Ovary (tissue), 10 donors: ENCODE measurements at regions of chr3 and their contacts with region 1.

Region 1: DNA sequence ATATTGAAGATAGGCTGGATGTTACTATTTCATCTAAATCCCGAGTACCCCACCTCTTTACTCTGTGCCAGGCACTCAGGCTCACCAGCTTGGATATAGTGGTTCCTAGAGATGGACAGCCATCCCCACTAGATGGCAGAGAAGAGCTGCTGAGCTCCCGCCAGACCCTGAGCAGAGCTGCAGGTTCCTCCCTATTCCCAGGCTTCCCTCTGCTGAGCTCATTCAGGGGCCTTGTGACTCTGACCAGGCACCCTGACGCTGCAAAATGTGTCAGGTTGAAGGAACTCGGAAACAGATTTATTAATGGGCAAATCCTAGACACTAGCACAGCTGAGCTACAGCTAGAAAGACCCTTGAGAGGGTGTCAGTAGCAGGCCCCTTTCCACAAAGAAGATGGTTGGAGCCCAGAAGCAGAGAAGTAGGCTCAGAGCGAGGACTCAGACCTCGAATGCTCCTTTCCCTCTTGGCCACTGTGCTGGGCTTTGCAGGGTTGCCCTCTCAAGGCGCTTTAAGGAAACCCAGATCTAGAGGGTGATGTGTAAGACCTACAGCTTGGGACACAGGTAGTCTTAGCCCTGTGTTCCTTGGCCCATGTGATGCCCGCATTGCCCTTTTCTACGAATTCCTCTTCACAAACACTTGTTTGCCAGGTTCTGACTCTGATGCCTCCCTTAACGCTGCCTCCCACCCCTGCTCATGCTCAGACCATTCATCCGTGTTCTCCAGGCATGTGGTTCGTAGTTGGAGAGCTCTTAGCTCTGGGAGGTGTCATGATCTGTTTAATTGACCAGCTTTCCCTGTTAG is 38.0 kb upstream of the RHO start:
- DNase-seq: peak; percentile 80 to 85 (median 82)
- H3K4me3 ChIP-seq: no peak overlapping the region
- H3K27ac ChIP-seq: peak overlapping the region; percentile 32 to 59
- H3K4me1 ChIP-seq: peaks cover 9% of the 10 kb centered on the region
- H3K27me3 ChIP-seq: no peaks in the 10 kb centered on the region
- CTCF ChIP-seq: peak; percentile 78 to 90 (median 82)
- EP300 ChIP-seq: no peak
- POLR2A ChIP-seq: no peak

Region 2: GRCh38 chr3:129560901-129561594 is 70.6 kb after region 1 on chr3:
- intact Hi-C with region 1: loop called in 2 of 4 experiments (anchors 5 to 10 kb)
- DNase-seq: peak; percentile 91 to 95 (median 92)
- H3K4me3 ChIP-seq: peak overlapping the region; percentile 8
- H3K27ac ChIP-seq: peak overlapping the region; percentile 82 to 92
- H3K4me1 ChIP-seq: peaks cover 15% of the 10 kb centered on the region
- H3K27me3 ChIP-seq: no peaks in the 10 kb centered on the region
- CTCF ChIP-seq: no peak
- EP300 ChIP-seq: no peak
- POLR2A ChIP-seq: no peak

Region 3: GRCh38 chr3:129606636-129607390 is 116.4 kb after region 1 on chr3 and contains the start of gene PLXND1:
- intact Hi-C with region 1: loop called in 3 of 4 experiments (anchors 5 to 10 kb)
- DNase-seq: peak in 4 of 5 donors; percentile 63 to 73 (median 70)
- H3K4me3 ChIP-seq: peak within 1 kb of the TSS; percentile 50
- H3K27ac ChIP-seq: peak within 1 kb of the TSS; percentile 73 to 79
- H3K4me1 ChIP-seq: peaks cover 11% of the 10 kb centered on the region
- H3K27me3 ChIP-seq: no peaks in the 10 kb centered on the region
- CTCF ChIP-seq: no peak
- EP300 ChIP-seq: no peak
- POLR2A ChIP-seq: no peak
- total RNA-seq, gene PLXND1: 21.6 to 111 (median 57.1) TPM

Region 4: DNA sequence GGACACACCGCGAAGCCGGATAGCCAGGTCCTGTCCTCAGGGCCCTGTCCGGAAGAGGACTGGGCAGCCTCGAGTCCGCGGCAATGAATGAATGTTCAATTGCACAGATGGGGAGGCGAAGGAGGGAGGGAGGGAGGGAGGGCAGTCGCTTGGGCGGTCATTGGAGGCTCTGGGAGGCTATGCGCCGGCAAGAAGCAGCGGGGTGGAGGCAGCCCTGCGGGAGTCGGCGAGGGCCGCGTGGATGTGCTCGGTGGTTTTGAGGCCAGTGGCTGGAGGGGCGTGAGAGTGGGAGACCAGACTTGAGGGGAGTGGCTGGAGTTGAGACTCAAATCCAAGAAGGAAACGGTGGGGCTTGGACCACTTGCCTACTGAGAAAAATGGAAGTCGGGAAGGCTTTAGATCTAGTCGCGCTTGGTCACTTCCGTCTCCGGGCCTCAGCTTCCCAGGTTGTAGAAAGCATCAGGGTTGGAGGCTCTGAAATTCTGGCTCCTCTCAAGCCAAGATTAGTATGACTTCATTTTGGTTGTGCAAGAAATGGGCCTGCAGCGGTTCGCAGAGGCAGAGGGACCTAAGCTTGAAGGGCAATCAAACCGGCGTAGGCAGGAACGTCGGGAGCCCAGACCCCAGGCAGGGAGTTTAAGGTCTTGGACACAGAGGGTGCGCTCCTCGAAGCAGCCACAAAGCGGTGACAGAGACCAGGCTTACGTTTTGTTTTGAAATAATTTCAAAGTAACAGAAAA is 137.2 kb after region 1 on chr3:
- intact Hi-C with region 1: loop called in 2 of 4 experiments (anchors 1 to 5 kb)
- DNase-seq: peak; percentile 70 to 81 (median 76)
- H3K4me3 ChIP-seq: peak overlapping the region; percentile 59
- H3K27ac ChIP-seq: peak overlapping the region; percentile 46 to 93
- H3K4me1 ChIP-seq: peaks cover 5% of the 10 kb centered on the region
- H3K27me3 ChIP-seq: no peaks in the 10 kb centered on the region
- CTCF ChIP-seq: peak; percentile 23 to 76 (median 72)
- EP300 ChIP-seq: no peak
- POLR2A ChIP-seq: peak; percentile 29

Region 5: DNA sequence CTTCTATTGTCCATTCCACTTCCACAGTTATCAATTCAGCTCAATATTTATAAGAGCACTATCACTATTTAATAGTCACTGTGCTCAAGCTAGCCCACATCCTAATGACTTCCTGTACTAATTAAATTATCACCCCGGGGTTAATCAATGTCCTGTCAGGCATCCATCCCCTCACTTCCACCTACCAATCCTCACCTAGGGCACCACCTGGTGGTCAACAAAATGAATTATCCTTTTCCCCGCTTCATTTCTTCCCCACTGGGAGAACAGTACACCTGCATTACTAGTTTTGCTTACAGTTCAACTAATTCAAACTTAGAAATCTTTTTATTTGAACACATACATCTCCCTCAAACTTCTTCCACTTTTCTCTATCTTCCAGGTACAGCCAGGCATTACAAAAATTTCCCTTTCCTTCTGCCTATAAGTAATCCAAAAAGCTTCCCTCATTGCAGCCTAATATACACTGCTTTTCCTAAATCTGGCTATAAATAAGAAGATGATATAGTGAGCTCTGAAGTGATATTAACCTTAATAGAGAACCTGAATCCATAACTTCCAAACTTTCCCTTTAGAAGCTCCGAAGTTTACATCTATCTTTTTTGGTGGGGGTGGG is 334.6 kb after region 1 on chr3:
- intact Hi-C with region 1: loop called in 3 of 4 experiments (anchors 5 to 10 kb)
- DNase-seq: peak in 1 of 5 donors; percentile 33
- H3K4me3 ChIP-seq: no peak overlapping the region
- H3K27ac ChIP-seq: no peak overlapping the region
- H3K4me1 ChIP-seq: peaks cover 1% of the 10 kb centered on the region
- H3K27me3 ChIP-seq: no peaks in the 10 kb centered on the region
- CTCF ChIP-seq: peak; percentile 26 to 68 (median 59)
- EP300 ChIP-seq: no peak
- POLR2A ChIP-seq: no peak

Region 6: DNA sequence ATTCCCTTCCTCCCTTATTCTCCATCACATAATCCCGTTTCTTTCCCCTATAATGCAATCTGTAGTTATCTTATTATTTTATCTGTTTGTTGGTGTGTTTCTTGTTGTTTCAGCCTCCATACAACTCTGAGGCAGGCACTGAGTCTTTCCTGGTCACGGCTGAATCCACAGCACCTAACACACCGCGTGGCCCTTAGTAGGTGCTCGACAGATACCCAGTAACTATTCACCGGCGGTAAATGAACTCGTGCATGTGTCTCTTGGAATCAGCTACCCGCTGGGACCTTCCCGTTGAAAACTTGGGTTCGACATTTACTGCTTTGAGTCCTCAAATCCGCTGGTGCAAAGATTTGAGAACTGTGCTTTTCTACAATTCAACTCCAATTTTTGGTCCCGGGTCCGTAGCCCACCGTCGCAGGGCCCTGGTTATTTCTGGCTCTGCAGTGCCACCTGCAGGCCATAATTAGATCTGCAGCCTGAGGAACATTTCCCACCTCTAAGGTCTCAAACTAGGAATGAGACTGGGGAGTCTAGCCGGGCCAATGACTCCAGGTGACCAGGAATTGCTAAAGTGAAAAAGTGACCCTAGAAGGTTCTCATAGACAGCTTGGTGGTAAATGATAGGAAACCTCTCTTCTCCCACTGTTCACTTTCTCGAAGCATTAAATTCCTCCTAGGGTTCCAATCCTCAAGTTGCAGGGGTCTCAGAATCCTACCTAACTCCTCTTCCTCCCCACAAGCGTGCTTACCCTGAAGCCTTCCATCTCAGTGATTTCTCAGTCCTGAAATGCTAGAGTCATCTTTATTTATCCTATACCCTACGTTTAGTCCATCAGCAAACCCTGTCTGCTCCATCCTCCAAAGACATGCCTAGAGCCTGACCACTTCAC is 444.0 kb after region 1 on chr3:
- intact Hi-C with region 1: loop called in 2 of 4 experiments (anchors 10 kb)
- DNase-seq: peak; percentile 19 to 60 (median 37)
- H3K4me3 ChIP-seq: no peak overlapping the region
- H3K27ac ChIP-seq: no peak overlapping the region
- H3K4me1 ChIP-seq: peaks cover 3% of the 10 kb centered on the region
- H3K27me3 ChIP-seq: no peaks in the 10 kb centered on the region
- CTCF ChIP-seq: peak; percentile 81 to 89 (median 89)
- EP300 ChIP-seq: no peak
- POLR2A ChIP-seq: no peak